ENCODE measurements at regions of chr16 and their contacts with region 1.

Region 1: GRCh38 chr16:23532448-23532847 is 22.2 kb upstream of the GGA2 start:
- DNase-seq: no peak
- H3K4me3 ChIP-seq: no peak overlapping the region
- H3K27ac ChIP-seq: no peak overlapping the region
- H3K4me1 ChIP-seq: no peaks in the 10 kb centered on the region
- H3K27me3 ChIP-seq: no peaks in the 10 kb centered on the region
- CTCF ChIP-seq: no peak
- POLR2A ChIP-seq: no peak

Region 2: DNA sequence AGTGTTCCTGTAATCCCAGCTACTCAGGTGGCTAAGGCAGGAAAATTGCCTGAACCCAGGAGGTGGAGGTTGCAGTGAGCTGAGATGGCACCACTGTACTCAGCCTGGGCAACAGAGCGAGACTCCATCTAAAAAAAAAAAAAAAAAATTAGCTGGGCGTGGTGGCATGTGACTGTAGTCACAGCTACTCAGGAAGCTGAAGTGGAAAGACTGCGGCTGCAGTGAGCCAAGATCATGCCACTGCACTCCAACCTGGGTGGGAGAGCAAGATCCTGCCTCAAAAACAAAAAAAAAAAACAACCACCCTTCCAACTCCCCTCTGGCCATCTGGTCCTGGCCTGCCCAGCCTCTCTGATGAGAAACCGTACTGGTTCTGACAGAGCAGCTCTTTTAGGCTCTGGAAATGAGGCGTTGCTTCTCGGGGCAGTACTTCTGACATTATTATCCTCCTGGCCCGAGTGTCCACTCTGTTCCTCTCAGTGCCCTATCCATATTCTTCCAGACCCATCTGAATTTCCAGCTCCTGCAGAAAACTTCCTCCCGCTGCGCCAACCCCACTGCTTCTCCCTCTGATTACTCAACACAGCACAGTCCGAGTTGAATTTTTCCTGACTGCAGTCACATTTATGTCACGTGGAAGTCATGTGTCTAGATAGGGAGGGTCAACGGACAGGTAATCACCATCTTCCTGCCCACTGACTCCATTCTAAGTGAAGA is 35.5 kb before region 1 on chr16:
- intact Hi-C with region 1: loop called (anchors 1 kb)
- DNase-seq: peak in 1 of 2 donors; percentile 76
- H3K4me3 ChIP-seq: peak overlapping the region in 1 of 3 donors; percentile 1
- H3K27ac ChIP-seq: peak overlapping the region; percentile 86
- H3K4me1 ChIP-seq: peaks cover 0 to 19% of the 10 kb centered on the region in 2 donors
- H3K27me3 ChIP-seq: no peaks in the 10 kb centered on the region
- CTCF ChIP-seq: no peak
- POLR2A ChIP-seq: no peak

Region 3: DNA sequence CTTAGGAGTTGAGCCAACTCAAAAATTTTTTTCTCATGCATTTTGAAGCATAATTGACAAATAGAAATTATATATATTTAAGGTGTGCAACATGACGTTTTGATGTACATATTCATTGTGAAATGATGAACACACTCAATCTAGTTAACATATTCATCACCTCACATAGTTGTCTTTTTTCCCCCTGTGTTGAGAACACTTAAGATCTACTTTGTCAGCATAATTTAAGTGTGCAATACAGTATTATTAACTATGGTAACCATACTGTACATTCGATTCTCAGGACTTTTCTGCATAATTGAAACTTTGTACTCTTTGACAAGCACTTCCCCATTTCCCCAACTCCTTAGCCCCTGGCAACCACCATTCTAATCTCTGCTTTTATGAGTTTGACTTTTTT is 1917.4 kb after region 1 on chr16:
- intact Hi-C with region 1: no loop called
- DNase-seq: no peak
- H3K4me3 ChIP-seq: no peak overlapping the region
- H3K27ac ChIP-seq: no peak overlapping the region
- H3K4me1 ChIP-seq: no peaks in the 10 kb centered on the region
- H3K27me3 ChIP-seq: no peaks in the 10 kb centered on the region
- CTCF ChIP-seq: no peak
- POLR2A ChIP-seq: no peak